Gastrocnemius medialis (tissue), 4 donors: ENCODE measurements at regions of chr16 and their contacts with region 1.

Region 1: DNA sequence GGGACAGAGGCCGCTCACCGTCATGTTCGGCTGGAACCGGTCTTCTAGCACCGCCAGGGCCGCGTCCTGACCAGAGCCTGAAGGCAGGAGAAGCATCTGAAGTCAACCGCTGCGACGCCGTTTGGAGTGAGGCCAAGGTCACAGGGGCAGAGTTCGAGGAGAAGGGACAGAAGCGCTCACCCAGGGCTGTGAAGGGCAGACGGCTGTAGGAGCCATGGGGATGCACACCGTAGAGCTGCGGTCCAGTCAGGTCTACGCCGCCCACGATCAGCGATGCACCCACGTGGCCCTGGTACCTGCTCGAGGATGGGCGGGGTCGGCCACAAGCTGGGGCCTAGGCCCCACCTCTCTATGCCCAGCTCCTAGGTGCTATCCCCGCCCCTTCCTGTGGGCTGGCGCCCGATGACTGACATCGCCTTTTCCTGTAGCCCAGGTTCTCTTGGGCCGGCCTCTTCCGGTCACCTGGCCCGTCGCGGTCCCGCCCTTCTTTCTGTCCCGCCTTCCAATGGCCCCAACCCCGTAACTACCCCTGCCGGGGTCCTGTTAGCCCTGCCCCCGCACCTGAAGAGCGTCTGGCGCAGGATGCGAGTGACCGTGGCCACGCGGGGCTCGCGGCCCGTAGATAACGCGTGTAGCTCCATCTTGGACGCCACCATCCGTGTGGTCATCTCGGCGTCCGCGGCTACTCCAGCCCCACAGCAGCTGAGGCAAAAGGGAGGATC is 1.1 kb downstream of the PSMB10 start:
- DNase-seq: peak; percentile 94 to 96
- ATAC-seq: peak; percentile 89 to 92
- H3K4me3 ChIP-seq: peak overlapping the region; percentile 79 to 99 (median 93)
- H3K27ac ChIP-seq: peak overlapping the region; percentile 91 to 98 (median 94)
- H3K4me1 ChIP-seq: peaks cover 22 to 29% of the 10 kb centered on the region in 2 donors
- H3K27me3 ChIP-seq: no peaks in the 10 kb centered on the region
- CTCF ChIP-seq: peak in 1 of 5 experiments; percentile 28
- POLR2A ChIP-seq: peak; percentile 61 to 65

Region 2: DNA sequence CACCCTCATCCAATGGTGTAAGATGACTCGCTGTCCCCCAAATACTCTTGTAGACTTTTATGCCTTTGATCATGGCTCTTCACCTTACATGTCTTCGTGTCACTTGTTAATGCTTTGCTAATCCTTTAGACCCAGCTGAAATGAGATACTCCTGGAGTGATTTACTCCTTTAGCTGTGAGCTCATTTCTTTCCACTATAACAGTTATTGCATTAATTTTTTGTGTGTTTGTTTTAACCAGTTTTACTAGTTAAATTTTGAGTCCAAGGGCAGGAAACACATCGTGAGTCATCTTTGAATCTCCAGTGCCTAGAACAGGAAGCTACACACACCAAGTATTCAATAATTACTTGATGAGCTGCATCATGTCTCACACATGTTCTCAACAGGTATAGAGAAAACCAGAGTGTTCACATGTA is 379.8 kb before region 1 on chr16:
- in situ Hi-C with region 1: no loop called
- intact Hi-C with region 1: loop called (anchors 10 kb)
- DNase-seq: no peak
- ATAC-seq: no peak
- H3K4me3 ChIP-seq: no peak overlapping the region
- H3K27ac ChIP-seq: peak overlapping the region in 3 of 4 donors; percentile 12 to 36 (median 33)
- H3K4me1 ChIP-seq: peaks cover 29 to 30% of the 10 kb centered on the region in 2 donors
- H3K27me3 ChIP-seq: no peaks in the 10 kb centered on the region
- CTCF ChIP-seq: no peak
- POLR2A ChIP-seq: no peak

Region 3: DNA sequence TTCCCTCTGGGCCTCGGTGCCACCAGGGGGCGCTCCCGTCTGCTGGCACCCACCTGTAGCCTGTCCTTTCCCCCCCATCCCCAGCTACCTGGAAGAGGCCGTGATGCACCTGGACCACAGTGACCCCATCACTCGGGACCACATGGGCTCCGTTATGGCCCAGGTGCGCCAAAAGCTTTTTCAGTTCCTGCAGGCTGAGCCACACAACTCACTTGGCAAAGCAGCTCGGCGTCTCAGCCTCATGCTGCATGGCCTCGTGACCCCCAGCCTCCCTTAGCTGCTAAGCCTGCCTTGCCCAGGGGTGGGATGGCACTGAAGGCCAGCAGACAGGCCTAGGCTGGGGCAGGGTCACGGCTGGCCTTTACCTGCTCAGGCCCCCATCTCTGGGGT is 51.7 kb before region 1 on chr16:
- in situ Hi-C with region 1: loop called in 1 of 4 experiments (anchors 10 kb)
- intact Hi-C with region 1: no loop called
- DNase-seq: peak in 1 of 2 donors; percentile 64
- ATAC-seq: peak in 1 of 2 donors; percentile 22
- H3K4me3 ChIP-seq: no peak overlapping the region
- H3K27ac ChIP-seq: peak overlapping the region; percentile 87 to 95 (median 90)
- H3K4me1 ChIP-seq: peaks cover 51 to 52% of the 10 kb centered on the region in 2 donors
- H3K27me3 ChIP-seq: no peaks in the 10 kb centered on the region
- CTCF ChIP-seq: peak; percentile 76 to 91 (median 91)
- POLR2A ChIP-seq: no peak

Region 4: DNA sequence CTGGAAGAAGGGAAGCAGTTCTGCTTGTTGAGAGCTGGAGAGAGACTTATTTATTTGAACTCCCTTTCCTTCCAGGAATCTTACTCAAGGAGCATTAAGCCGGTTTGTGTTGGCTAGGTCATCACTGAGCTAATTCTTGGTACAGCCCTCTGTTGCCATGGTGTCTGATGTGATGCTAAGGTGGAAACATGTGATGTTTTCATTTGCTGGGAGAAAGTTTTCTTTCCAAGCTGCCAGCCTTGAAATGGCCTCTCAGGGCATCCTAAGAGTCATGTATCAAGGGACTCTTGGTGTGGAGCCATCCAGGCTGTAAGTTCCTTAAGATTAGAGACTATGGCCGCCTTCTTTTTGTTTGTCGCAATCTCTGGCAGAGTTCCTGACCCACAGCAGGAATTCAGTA is 38.3 kb before region 1 on chr16:
- in situ Hi-C with region 1: no loop called
- intact Hi-C with region 1: no loop called
- DNase-seq: no peak
- ATAC-seq: no peak
- H3K4me3 ChIP-seq: no peak overlapping the region
- H3K27ac ChIP-seq: peak overlapping the region; percentile 70 to 100 (median 94)
- H3K4me1 ChIP-seq: peaks cover 50 to 59% of the 10 kb centered on the region in 2 donors
- H3K27me3 ChIP-seq: no peaks in the 10 kb centered on the region
- CTCF ChIP-seq: no peak
- POLR2A ChIP-seq: no peak

Region 5: DNA sequence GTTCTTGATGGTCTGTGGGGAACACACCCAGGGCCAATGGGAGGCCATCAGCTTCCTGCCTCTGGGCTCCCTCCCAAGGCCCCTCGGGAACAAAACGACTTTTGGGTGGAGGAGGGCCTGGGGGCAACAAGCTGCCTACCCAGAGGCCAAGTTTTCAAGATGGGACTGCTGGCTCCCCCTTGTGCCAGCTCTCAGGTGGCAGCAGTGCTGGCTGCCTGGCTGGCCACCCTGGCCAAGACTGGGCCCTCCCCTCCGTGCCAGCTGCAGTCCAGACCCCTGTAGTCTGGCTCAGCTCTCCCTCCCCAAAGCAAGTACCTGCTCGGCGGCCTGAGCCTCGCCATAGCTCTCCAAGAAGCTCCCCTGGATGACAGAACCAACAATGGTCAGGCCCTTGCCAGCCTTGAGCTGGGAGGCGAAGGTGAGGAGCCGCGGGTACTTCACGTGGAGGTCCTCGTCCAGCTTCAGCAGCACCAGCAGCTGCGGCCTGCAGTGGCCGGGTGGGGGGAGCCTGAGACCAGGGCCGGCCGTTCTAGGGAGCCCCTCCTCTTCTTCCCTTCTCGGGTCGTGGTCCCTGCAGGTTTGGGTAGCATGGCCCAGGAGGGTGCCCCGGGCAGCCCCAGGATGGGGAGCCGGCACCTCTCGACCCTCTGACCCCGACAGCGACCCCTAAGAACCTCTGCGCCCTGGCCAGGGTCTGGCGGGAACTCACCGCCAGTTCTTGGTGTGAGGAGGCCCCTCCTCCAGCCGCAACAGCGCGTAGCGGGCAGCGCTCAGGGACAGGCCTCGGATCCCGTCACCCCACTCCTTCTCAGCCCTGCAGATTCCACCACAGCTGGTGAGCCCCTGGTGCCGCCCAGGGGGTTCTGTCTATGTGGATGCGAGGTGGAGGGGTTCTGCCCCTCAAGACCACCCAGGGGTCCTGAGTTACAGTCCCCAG is 11.3 kb after region 1 on chr16:
- in situ Hi-C with region 1: no loop called
- intact Hi-C with region 1: no loop called
- DNase-seq: no peak
- ATAC-seq: no peak
- H3K4me3 ChIP-seq: no peak overlapping the region
- H3K27ac ChIP-seq: peak overlapping the region in 1 of 4 donors; percentile 22
- H3K4me1 ChIP-seq: peaks cover 25 to 29% of the 10 kb centered on the region in 2 donors
- H3K27me3 ChIP-seq: no peaks in the 10 kb centered on the region
- CTCF ChIP-seq: no peak
- POLR2A ChIP-seq: no peak

Region 6: GRCh38 chr16:67959520-67959919 is 24.0 kb after region 1 on chr16:
- in situ Hi-C with region 1: no loop called
- intact Hi-C with region 1: loop called (anchors 2 kb)
- DNase-seq: peak in 1 of 2 donors; percentile 88
- ATAC-seq: peak; percentile 56 to 78
- H3K4me3 ChIP-seq: no peak overlapping the region
- H3K27ac ChIP-seq: peak overlapping the region; percentile 87 to 95 (median 89)
- H3K4me1 ChIP-seq: peaks cover 63% of the 10 kb centered on the region in 2 donors
- H3K27me3 ChIP-seq: no peaks in the 10 kb centered on the region
- CTCF ChIP-seq: no peak
- POLR2A ChIP-seq: no peak

Region 7: DNA sequence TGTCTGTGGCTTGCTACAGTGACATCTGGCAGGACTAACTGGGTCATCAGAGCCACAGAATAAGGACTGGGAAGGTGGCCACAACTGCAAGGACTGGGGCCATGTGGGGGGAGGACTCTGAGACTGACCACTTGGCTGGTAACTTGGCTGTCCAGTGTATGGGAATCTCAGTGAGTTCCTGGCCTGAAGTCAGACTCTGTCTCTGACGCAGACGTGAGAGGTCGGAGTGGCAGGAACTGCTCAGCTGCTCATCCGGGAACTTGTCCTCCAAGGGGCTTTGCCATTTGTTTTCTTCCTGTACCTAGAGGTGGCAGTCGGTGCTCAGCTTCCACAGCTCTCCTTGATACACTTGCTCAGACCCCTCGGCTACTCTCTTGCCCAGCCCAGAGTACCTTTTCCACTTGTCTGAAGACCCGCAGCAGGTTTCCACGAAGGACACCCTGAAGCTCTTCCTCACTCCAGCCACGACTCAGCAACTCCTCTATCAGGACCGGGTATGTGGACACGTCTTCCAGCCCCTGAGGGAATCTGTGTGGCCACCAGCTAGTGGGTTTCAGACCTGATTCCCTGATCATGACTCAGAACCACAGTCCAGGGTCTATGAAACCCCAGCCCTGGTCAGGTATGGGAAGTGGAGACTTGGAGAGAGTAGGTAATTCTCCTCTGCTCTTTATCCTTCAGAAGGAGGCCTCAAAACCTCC is 52.0 kb after region 1 on chr16:
- in situ Hi-C with region 1: no loop called
- intact Hi-C with region 1: loop called (anchors 2 kb)
- DNase-seq: peak; percentile 65 to 83
- ATAC-seq: peak; percentile 78 to 80
- H3K4me3 ChIP-seq: peak overlapping the region; percentile 10 to 49 (median 42)
- H3K27ac ChIP-seq: peak overlapping the region; percentile 83 to 93 (median 92)
- H3K4me1 ChIP-seq: peaks cover 64 to 65% of the 10 kb centered on the region in 2 donors
- H3K27me3 ChIP-seq: no peaks in the 10 kb centered on the region
- CTCF ChIP-seq: no peak
- POLR2A ChIP-seq: peak; percentile 53 to 62

Region 8: DNA sequence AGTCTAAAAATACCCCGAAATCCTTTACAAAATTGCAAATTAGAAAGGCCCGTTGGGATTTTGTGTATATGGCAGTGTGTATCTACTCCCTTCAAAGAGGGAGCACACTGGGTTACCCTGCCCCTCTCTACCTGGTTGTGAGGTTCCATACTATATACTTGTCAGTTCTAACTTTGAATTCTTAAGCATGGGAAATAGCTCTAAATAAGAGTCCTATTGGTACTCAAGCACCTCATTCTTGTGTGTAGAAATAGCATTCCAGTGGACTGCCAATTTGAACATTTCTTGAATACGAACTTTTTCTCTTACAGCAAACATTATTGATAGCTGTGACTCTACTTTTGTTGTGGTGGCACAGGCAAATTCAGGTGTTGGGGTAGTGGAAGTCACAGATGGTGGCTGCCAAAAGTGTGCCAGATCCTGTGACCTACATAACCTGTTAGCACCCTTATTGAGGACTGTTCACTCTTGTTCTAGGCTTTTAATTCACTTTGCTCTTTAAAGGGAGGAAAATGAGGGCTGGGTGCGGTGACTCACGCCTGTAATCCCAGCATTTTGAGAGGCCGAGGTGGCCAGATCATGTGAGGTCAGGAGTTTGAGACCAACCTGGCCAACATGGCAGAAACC is 284.3 kb after region 1 on chr16:
- in situ Hi-C with region 1: no loop called
- intact Hi-C with region 1: no loop called
- DNase-seq: no peak
- ATAC-seq: no peak
- H3K4me3 ChIP-seq: no peak overlapping the region
- H3K27ac ChIP-seq: peak overlapping the region; percentile 15 to 55 (median 43)
- H3K4me1 ChIP-seq: peaks cover 4 to 11% of the 10 kb centered on the region in 2 donors
- H3K27me3 ChIP-seq: no peaks in the 10 kb centered on the region
- CTCF ChIP-seq: no peak
- POLR2A ChIP-seq: no peak